ENCODE measurements at regions of chr12 and their contacts with region 1.

Region 1: GRCh38 chr12:47812797-47813510 is 6.7 kb downstream of the HDAC7 start:
- DNase-seq: peak; percentile 86
- H3K4me3 Mint-ChIP-seq: peak overlapping the region; percentile 95
- H3K27ac Mint-ChIP-seq: peak overlapping the region; percentile 100
- H3K4me1 Mint-ChIP-seq: peaks cover 75% of the 10 kb centered on the region
- H3K27me3 Mint-ChIP-seq: no peaks in the 10 kb centered on the region

Region 2: GRCh38 chr12:47350062-47350408 is 462.9 kb before region 1 on chr12:
- intact Hi-C with region 1: loop called (anchors 5 kb)
- DNase-seq: no peak
- H3K4me3 Mint-ChIP-seq: peak overlapping the region; percentile 52
- H3K27ac Mint-ChIP-seq: peak overlapping the region; percentile 98
- H3K4me1 Mint-ChIP-seq: peaks cover 58% of the 10 kb centered on the region
- H3K27me3 Mint-ChIP-seq: no peaks in the 10 kb centered on the region

Region 3: GRCh38 chr12:47758834-47759690 is 53.9 kb before region 1 on chr12 and contains the start of gene RAPGEF3:
- intact Hi-C with region 1: loop called (anchors 2 kb)
- DNase-seq: peak; percentile 62
- H3K4me3 Mint-ChIP-seq: peak within 1 kb of the TSS; percentile 75
- H3K27ac Mint-ChIP-seq: no peak within 1 kb of the TSS
- H3K4me1 Mint-ChIP-seq: peaks cover 34% of the 10 kb centered on the region
- H3K27me3 Mint-ChIP-seq: peaks cover 7% of the 10 kb centered on the region
- total RNA-seq, gene RAPGEF3: 1.8 and 2.7 TPM in 2 replicates

Region 4: GRCh38 chr12:47832263-47832933 is 19.4 kb after region 1 on chr12:
- intact Hi-C with region 1: loop called (anchors 1 kb)
- DNase-seq: no peak
- H3K4me3 Mint-ChIP-seq: peak overlapping the region; percentile 76
- H3K27ac Mint-ChIP-seq: peak overlapping the region; percentile 98
- H3K4me1 Mint-ChIP-seq: peaks cover 76% of the 10 kb centered on the region
- H3K27me3 Mint-ChIP-seq: no peaks in the 10 kb centered on the region

Region 5: GRCh38 chr12:48681738-48682532 is 869.0 kb after region 1 on chr12 and contains the start of gene KANSL2:
- intact Hi-C with region 1: loop called (anchors 5 kb)
- DNase-seq: peak; percentile 98
- H3K4me3 Mint-ChIP-seq: peak within 1 kb of the TSS; percentile 99
- H3K27ac Mint-ChIP-seq: peak within 1 kb of the TSS; percentile 94
- H3K4me1 Mint-ChIP-seq: peaks cover 38% of the 10 kb centered on the region
- H3K27me3 Mint-ChIP-seq: no peaks in the 10 kb centered on the region
- total RNA-seq, gene KANSL2: 59.5 and 62.7 TPM in 2 replicates

Measured in activated T-helper 2 cell treated with anti-CD3 and anti-CD28 coated beads, Interferon-gamma antibody, Interleukin-2, Interleukin-4, amounts not matched to agents 10 μg/mL and 5 μg/mL and 100 μg/mL, durations not matched to agents 14 hours and 24 hours and 36 hours (primary cell).